Activated T-helper 2 cell treated with anti-CD3 and anti-CD28 coated beads, Interferon-gamma antibody, Interleukin-2, Interleukin-4, amounts not matched to agents 10 μg/mL and 5 μg/mL and 100 μg/mL, durations not matched to agents 14 hours and 24 hours and 36 hours (primary cell): ENCODE measurements at regions of chr9 and their contacts with region 1.

Region 1: DNA sequence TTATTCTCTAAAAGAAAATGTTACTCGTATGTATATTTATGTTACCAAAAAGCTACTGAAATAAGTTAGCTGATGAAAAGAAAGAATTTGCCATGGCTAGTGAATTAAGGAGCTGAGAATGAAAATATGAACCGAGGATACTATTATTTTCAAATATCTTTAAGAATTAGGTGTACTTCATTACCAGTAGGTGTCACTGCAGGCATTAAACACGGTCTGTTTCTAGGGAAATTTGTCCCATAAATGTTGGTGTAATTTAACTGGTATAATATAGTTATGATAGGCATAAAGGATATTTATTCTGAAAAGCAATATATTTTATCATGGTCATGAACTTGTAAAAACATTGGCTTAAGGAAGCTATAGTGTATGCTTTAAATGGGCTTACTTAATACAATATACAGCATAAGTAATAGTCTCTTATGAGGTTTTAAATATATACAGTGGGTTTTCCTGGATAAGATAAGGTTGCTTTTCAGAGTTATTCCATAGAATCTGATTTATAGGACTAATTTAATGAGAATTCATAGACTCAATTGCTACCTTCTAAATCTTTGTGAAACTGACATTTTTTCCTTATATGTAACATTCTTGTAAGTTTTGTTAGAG is 72.4 kb upstream of the MPDZ start:
- DNase-seq: no peak
- H3K4me3 Mint-ChIP-seq: no peak overlapping the region
- H3K27ac Mint-ChIP-seq: no peak overlapping the region
- H3K4me1 Mint-ChIP-seq: no peaks in the 10 kb centered on the region
- H3K27me3 Mint-ChIP-seq: no peaks in the 10 kb centered on the region

Region 2: DNA sequence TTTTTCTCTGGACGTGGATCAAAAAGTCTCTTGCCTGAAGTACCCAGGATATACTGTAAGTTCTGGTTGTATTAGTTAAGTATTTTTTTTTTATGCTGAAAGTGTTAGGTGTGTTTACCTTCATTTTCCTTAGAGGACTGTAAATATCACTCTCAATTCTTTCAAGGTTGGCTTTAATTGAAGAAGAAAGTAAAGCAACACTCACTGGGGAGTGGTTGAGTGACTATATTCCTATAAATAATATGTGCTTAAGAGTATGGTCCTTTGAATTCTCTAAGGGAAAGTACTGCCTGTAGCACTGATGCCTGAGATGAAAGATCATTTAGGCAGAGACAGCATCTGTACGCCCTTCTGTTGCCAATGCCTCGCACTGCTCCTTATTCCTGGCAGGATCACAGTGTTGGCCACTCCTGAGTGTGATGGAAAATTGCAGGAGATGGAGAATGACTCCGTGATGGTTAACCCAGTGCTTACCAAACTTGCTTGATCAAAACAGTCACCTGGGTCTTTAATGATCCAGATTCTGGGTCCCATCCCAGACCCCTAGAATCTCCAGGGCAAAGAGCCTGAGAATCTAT is 109.6 kb after region 1 on chr9:
- intact Hi-C with region 1: no loop called
- DNase-seq: no peak
- H3K4me3 Mint-ChIP-seq: no peak overlapping the region
- H3K27ac Mint-ChIP-seq: no peak overlapping the region
- H3K4me1 Mint-ChIP-seq: no peaks in the 10 kb centered on the region
- H3K27me3 Mint-ChIP-seq: no peaks in the 10 kb centered on the region

Region 3: DNA sequence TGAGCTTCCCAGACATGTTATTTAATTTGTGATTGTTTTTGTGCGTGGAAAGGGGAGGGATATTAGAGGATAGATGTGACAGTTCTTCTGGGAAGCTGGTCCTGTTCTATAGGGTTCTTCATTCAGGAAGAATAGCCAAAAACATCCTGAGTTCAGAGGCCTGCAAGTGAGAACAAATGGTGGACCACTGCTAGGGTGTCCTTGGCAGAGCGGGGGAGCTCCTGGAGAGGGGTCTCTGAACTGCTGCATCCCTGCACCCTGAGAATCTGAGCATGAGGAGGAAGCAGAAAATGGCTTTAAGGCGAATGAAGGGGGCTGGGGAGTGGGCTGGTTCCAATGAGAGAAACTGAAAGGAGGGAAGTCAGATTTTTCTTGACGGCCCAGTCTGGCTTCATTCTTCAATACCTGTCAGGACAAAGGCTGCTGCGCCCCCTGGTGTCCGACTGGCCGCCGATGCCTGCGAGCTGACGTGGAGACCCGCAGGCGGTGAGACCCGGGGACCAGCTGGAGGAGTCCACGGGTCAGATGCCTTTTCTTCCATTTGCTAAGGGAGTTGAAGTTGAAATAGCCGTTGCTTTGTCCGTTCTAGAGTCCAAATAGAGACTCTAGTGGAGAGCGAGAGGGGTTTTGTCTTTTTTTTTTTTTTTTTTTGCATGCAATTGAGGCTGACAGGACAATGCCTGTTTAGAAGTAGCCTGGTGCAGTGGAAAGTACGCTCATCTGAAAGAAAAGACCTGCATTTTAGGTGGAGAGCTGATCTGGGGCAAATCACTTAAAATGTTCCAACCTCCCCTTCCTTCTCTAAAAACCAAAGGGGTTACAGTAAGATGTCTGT is 1001.6 kb after region 1 on chr9:
- intact Hi-C with region 1: loop called (anchors 5 kb)
- DNase-seq: peak; percentile 61
- H3K4me3 Mint-ChIP-seq: no peak overlapping the region
- H3K27ac Mint-ChIP-seq: no peak overlapping the region
- H3K4me1 Mint-ChIP-seq: peaks cover 4% of the 10 kb centered on the region
- H3K27me3 Mint-ChIP-seq: peaks cover 48% of the 10 kb centered on the region